ENCODE measurements at regions of chr2 and their contacts with region 1.

Region 1: DNA sequence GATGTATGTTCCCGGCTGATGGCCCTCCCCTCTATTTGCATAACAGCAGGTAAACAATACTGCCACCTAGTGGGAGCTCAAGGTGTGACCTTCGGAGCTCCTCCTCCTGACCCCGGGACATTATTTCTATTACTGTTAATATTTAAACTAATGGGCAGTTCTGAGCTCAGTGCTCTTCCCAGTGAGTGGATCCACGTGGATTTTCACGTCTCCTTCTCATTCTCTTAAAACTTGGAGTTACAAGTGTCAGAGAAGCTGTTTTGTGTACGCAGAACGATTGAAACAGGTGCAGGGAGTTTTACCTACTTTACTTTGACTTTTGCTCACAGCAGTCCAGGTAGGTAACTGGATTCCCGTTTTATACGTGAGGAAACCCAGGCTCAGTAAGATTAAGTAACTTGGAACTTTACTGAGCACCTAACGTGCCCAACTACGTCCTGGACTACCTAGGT is 127.3 kb downstream of the PRKCE start:
- DNase-seq: no peak

Region 2: DNA sequence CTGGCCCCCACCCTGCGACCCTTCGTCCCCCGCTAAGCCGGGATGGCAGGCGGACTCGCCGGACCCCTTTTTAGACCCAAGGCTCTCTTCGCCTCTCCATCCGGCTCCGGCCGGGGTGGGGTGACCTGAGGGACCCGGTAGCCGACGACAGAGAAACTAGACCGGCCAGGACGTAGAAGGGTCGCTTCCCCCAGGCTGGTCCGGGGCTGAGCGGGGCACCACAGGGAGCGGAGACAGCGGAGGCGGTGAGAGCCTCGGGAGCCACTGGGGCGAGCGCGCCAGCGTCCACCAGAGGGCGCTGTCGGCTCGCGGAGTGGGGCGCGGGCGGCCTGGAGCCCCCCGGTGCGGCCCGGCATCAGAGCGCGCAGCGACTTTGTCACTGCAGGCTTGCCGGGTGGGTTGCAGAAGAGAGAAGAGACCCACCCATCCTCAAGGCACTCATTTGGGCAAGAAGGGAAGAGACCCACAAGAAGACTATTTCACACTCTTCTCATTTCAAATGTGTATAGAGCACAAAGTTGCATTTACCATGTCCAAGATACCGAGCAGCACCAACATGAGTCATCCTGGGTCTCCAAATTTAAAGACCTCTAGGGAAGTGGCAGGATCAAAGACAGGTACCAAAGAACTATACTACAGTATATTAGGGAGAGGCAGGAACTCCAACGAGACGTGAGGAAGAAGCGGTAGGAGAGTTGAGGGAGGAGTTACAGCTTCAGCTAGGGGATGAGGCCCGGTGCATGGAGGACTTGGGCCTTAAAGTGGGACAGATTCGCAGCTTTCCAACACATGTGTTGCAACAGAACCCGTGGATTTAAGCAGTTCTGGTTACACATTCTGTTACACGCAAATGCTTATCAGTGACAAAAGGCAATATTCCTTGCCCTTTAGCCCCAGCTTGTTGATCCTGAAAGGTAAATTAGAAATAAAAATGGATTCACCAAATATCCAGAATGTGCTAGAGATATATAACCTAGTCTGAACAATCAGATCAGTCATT is 134.9 kb before region 1 on chr2:
- intact Hi-C with region 1: loop called in 1 of 2 experiments (anchors 1 kb)
- DNase-seq: peak; percentile 90

Region 3: DNA sequence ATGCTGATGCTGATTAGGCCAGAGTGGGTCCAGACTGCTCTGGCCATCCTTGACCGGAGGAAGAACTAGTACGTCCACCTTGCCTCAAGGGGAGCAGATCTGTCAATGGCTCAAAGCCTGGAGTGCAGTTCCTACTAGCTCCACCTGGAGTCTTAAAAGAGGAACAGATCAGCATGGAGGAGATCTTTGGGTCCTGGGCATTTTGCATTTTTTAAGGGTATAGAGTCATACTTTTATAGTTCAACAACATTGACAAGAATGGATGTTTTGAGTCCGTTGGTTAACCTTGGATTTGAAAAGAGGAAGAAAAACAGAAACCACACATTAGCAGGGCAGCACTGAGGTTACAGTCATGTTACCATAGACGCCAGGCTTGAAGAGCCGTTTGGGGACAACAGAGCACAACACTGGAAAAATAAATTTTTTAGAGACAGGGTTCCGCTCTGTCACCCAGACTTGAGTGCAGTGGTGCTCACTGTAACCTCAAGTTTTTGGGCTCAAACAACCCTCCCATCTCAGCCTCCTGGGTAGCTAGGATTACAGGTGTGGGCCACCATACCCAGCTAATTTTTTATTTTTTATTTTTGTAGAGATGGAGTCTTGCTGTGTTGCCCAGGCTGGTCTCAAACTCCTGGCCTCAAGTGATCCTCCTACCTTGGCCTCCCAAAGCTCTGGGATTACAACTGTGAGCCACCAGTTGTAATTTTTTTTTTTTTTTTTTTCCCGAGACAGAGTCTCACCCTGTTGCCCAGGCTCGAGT is 48.8 kb before region 1 on chr2:
- intact Hi-C with region 1: loop called in 1 of 2 experiments (anchors 1 kb)
- DNase-seq: no peak

Region 4: DNA sequence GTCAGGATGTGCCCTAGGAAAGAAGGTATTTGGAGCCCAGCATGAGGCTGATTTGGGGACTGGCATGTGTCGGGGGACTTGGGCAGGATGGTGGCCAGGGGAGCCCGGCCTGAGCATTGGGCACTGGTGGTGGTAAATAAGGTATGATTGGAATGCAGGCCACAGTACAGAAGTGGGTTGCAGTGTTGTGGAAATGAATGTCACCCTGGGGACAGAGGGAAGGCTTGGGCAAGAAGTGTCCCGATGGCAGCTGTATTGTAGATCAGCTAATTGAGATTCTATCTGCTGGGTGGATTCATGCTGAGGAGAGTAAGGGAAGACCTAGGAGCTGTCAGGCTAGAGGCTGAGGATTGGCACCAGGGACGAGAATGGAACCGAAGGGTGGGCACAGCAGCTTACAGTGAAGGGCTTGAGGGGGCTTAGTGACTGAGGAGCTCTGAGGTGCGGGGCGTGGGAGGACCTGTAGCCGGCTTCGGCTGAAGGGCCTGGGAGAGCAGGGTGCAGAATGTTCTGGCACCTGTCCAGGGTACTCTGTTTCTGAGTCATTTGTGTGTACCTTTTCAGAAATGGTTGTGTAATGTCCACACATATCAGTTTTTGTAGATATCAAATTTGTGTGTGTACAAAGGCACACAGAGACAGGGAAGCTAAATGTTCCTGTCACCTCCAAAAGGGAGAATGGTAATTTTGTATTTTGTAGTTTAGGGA is 43.0 kb after region 1 on chr2:
- intact Hi-C with region 1: loop called in 1 of 2 experiments (anchors 1 kb)
- DNase-seq: no peak

Region 5: DNA sequence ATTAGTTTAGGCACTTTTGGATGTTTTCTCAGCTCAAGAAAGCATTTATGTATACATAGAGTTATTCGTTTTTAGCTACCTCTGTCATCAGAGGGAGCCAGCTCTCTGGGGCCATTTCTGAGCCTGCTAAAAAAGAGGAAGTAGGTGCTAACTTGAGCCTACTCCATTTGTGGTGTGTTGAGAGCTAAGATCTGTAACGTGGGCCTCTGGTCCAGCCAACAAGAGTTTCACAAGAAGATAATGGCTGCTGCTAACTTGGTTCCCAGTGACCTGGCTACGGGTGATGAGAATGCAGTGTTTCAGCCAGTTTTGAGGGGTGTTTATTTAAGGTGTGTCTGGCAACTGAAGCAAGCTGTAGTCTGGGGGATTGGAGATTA is 55.2 kb after region 1 on chr2:
- intact Hi-C with region 1: no loop called
- DNase-seq: no peak

Region 6: GRCh38 chr2:45935791-45936622 is 157.3 kb after region 1 on chr2:
- intact Hi-C with region 1: loop called in 1 of 2 experiments (anchors 10 kb)
- DNase-seq: peak; percentile 98

Region 7: GRCh38 chr2:47569658-47570472 is 1791.1 kb after region 1 on chr2:
- intact Hi-C with region 1: no loop called
- DNase-seq: peak; percentile 77

Measured in posterior vena cava (tissue), 2 donors.